ENCODE measurements at regions of chr16 and their contacts with region 1.

Region 1: DNA sequence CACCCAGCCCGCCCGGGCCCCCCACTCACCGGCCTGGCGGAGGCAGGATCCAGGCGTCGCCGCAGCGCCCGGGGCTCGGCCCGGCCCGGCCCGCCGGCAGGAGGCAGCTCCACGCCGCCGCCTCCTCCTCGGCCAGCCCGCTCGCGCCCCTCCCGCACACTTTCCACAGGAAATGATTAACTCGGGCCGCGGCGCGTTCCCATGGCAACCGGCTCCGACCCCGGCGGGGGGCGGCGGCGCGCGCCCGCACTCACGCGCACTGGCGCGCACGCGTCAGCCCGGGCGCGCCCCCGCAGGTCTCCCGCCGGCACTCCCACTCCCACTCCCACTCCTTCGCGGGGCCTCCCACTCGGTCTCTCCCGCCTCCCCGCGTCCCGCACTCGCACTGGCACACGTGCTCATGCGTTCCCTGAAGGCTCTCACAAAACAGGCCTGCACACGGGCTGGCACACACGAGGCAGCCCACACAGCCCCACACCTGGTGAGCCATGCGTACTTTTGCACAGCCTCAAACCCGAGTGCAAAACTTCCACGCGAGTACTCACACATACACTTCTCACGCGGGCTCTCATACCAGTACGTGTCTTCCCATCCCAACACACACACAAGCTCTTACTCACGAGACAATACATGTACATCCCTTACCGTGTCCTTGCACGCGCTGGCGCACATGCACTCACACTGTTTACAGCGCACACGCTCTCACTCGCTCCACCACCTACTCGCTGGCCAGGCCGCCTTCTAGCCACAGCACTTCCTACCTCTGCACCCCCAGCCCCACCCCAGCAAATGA is at the start of gene KIFC3:
- DNase-seq: peak; percentile 91
- H3K4me3 Mint-ChIP-seq: peak within 1 kb of the TSS; percentile 87
- H3K27ac Mint-ChIP-seq: peak within 1 kb of the TSS; percentile 89
- H3K4me1 Mint-ChIP-seq: peaks cover 27% of the 10 kb centered on the region
- H3K27me3 Mint-ChIP-seq: peaks cover 68% of the 10 kb centered on the region
- total RNA-seq, gene KIFC3: 0.58 and 1.7 TPM in 2 replicates

Region 2: DNA sequence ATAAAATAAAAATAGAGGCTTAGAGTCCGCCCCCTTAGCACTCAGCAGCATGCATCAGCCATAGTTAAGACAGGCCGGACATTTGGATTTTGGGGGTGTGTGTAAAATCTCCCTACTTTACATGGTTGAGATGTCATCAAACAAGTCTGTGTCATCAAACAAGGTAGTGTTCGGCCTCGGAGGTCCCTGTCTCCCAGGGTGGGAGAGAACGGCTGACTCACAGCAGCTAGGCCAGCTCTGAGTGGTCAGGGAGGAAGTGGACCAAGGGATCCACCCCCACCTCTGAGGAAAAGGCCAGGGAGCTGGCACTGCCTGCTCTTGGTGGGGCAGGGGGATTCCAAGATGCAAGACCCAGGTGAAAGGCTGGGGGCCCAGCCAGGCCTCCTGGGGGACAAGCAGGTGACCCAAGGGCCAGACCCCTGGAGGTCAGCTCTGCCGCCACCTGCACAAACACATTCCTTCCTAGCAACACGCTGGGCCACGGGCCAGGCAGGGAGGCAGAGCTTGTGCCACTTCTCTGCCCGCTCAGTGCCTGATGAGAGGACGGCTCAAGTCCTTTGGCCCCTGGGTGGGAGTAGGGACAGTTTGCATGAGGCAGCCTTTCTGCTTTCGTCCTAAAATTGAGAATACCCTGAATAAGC is 28.8 kb before region 1 on chr16:
- intact Hi-C with region 1: no loop called
- DNase-seq: no peak
- H3K4me3 Mint-ChIP-seq: no peak overlapping the region
- H3K27ac Mint-ChIP-seq: no peak overlapping the region
- H3K4me1 Mint-ChIP-seq: no peaks in the 10 kb centered on the region
- H3K27me3 Mint-ChIP-seq: no peaks in the 10 kb centered on the region

Region 3: DNA sequence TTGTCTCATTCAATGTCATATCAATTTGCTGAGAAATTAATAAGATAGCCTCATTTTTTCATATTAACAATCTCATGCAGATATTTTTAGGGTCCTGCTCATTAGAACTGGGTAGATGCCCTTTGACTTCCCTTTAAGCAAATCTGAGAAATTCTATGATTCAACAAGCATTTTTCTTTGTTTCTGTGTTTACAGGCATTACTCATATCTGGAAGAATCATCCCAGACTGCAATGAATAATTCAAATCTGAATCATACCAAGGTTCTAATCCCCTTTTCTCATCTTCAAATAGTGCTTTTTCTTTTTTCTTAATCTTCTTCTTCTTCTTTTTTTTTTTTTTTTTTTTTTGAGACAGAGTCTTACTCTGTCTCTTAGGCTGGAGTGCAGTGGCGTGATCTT is 68.9 kb after region 1 on chr16:
- intact Hi-C with region 1: loop called (anchors 2 kb)
- DNase-seq: no peak
- H3K4me3 Mint-ChIP-seq: no peak overlapping the region
- H3K27ac Mint-ChIP-seq: no peak overlapping the region
- H3K4me1 Mint-ChIP-seq: no peaks in the 10 kb centered on the region
- H3K27me3 Mint-ChIP-seq: peaks cover 9% of the 10 kb centered on the region

Measured in activated CD4-positive, alpha-beta T cell treated with anti-CD3 and anti-CD28 coated beads, Interleukin-2, amount 10 ng/mL, durations not matched to agents 24 days and 14 days (primary cell).